A673 (cell line): ENCODE measurements at regions of chr16 and their contacts with region 1.

Region 1: DNA sequence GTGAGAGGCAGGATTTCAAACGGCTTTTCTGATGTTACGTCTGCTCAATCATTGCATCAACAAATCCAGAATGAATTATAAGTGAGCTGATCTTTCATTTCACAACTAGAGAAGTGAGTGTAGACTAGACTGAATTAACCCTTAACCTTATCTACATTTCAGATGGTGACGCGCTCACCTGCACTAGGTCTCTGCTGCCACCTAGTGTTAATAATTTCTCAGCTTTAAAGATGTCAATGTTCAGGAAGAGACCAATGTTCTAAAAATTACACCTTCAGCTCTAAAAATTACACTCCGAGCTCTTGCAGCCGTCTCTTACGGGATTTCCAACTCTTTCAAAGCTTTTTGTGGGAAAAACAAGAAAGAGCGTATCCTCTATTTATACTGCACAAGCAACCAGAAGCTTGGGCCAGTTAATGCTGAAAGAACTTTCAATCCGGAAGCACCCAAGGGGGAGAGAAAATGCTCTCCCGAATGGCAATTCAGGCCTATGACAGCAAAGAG is 88.2 kb upstream of the FA2H start:
- DNase-seq: peak; percentile 67
- H3K4me3 ChIP-seq: no peak overlapping the region
- H3K27ac ChIP-seq: no peak overlapping the region
- H3K4me1 ChIP-seq: no peaks in the 10 kb centered on the region
- H3K27me3 ChIP-seq: no peaks in the 10 kb centered on the region
- CTCF ChIP-seq: peak; percentile 91

Region 2: GRCh38 chr16:74309789-74310781 is 552.7 kb before region 1 on chr16:
- CTCF ChIA-PET with region 1: no interaction called
- POLR2A ChIA-PET with region 1: no interaction called
- intact Hi-C with region 1: loop called (anchors 5 kb)
- DNase-seq: peak; percentile 73
- H3K4me3 ChIP-seq: no peak overlapping the region
- H3K27ac ChIP-seq: no peak overlapping the region
- H3K4me1 ChIP-seq: no peaks in the 10 kb centered on the region
- H3K27me3 ChIP-seq: no peaks in the 10 kb centered on the region
- CTCF ChIP-seq: peak; percentile 76

Region 3: GRCh38 chr16:74709441-74709877 is 153.3 kb before region 1 on chr16:
- CTCF ChIA-PET with region 1: interaction called, 9 read pairs
- POLR2A ChIA-PET with region 1: no interaction called
- intact Hi-C with region 1: loop called (anchors 1 kb)
- DNase-seq: peak; percentile 84
- H3K4me3 ChIP-seq: no peak overlapping the region
- H3K27ac ChIP-seq: no peak overlapping the region
- H3K4me1 ChIP-seq: no peaks in the 10 kb centered on the region
- H3K27me3 ChIP-seq: no peaks in the 10 kb centered on the region
- CTCF ChIP-seq: peak; percentile 99

Region 4: DNA sequence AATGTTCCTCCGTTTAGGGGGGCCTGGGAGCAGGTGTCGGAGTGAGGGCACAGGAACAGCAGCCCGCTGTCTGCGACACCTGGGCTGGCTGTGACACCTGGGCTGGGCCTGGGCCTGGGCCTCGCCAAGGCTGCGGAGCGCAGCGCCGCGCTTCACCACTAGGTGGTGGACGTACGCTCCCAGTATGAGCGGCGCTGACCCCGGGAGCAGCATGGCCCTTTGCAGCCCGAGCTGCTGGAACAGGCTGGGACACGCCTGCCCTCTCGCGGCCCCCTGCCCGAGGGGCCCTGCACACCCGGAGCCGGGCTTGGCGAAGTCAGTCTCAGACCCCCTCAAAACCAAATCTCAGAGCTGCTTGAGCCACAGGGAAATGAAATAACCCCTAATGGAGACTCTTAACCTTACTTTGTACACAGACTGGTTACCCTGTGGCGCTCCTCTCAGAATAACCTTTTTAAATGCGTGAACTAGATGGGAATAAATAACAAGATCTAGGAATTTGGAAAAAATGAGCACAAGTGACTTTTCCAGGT is 49.6 kb before region 1 on chr16:
- CTCF ChIA-PET with region 1: interaction called, 19 read pairs
- POLR2A ChIA-PET with region 1: no interaction called
- intact Hi-C with region 1: loop called (anchors 1 kb)
- DNase-seq: peak; percentile 78
- H3K4me3 ChIP-seq: no peak overlapping the region
- H3K27ac ChIP-seq: no peak overlapping the region
- H3K4me1 ChIP-seq: no peaks in the 10 kb centered on the region
- H3K27me3 ChIP-seq: no peaks in the 10 kb centered on the region
- CTCF ChIP-seq: peak; percentile 93

Region 5: GRCh38 chr16:74825941-74826542 is 36.8 kb before region 1 on chr16:
- CTCF ChIA-PET with region 1: no interaction called
- POLR2A ChIA-PET with region 1: no interaction called
- intact Hi-C with region 1: no loop called
- DNase-seq: no peak
- H3K4me3 ChIP-seq: no peak overlapping the region
- H3K27ac ChIP-seq: no peak overlapping the region
- H3K4me1 ChIP-seq: peaks cover 7% of the 10 kb centered on the region
- H3K27me3 ChIP-seq: no peaks in the 10 kb centered on the region
- CTCF ChIP-seq: no peak

Region 6: GRCh38 chr16:75110637-75111513 is 248.1 kb after region 1 on chr16:
- CTCF ChIA-PET with region 1: interaction called, 9 read pairs
- POLR2A ChIA-PET with region 1: no interaction called
- intact Hi-C with region 1: loop called (anchors 10 kb)
- DNase-seq: peak; percentile 91
- H3K4me3 ChIP-seq: peak overlapping the region; percentile 39
- H3K27ac ChIP-seq: peak overlapping the region; percentile 41
- H3K4me1 ChIP-seq: peaks cover 46% of the 10 kb centered on the region
- H3K27me3 ChIP-seq: no peaks in the 10 kb centered on the region
- CTCF ChIP-seq: peak; percentile 93